T-cell (primary cell): ENCODE measurements at regions of chr2 and their contacts with region 1.

Region 1: DNA sequence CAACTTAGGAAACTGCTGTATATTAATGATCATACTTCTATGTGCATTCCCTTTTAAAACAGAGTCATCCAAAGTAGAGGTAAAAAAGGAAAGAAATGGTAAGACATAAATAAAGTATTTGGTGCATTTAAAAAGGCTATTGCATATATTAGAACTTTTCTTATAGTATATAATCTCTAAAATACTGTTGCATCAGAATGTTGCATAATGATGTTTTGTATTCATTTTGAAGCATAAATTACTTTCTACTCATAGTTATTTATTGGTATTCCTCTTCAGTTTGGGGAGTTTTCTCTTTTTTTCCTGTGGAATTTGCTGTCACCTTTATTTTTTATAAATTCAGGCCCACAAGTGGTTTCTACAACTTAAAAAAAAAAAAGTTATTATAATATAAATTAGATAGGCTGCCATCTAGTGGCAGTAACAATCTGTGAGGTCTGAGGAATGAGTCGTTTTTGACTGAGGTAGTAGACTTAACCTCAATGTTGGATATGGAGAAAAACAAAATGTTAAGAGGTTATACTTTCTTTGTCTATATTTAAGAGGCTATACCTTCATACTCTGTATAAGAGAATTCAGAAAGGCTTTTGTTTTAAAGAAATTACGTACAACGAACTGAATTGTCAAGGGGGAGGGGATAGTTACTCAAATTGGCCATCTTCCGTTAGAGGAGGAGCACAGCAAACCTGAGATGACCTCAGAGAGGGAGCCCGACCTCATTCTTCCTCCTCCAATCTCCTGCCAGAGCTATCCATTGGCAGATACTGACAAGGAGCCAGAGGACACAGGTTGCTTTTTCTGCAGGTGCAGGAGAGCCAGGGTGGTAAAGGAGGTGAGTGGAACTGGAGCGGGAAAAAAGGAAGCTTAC is 23.8 kb downstream of the ANKAR start:
- DNase-seq: peak in 23 of 35 experiments; percentile 5 to 74 (median 28)
- ATAC-seq: peak; percentile 37 to 71 (median 44)
- H3K4me3 ChIP-seq: no peak overlapping the region
- H3K4me3 Mint-ChIP-seq: no peak overlapping the region
- H3K27ac ChIP-seq: no peak overlapping the region
- H3K27ac Mint-ChIP-seq: peak overlapping the region in 1 of 2 donors; percentile 50
- H3K4me1 ChIP-seq: no peaks in the 10 kb centered on the region
- H3K4me1 Mint-ChIP-seq: peaks cover 0 to 4% (median 0%) of the 10 kb centered on the region in 3 donors
- H3K27me3 ChIP-seq: no peaks in the 10 kb centered on the region
- H3K27me3 Mint-ChIP-seq: no peaks in the 10 kb centered on the region

Region 2: DNA sequence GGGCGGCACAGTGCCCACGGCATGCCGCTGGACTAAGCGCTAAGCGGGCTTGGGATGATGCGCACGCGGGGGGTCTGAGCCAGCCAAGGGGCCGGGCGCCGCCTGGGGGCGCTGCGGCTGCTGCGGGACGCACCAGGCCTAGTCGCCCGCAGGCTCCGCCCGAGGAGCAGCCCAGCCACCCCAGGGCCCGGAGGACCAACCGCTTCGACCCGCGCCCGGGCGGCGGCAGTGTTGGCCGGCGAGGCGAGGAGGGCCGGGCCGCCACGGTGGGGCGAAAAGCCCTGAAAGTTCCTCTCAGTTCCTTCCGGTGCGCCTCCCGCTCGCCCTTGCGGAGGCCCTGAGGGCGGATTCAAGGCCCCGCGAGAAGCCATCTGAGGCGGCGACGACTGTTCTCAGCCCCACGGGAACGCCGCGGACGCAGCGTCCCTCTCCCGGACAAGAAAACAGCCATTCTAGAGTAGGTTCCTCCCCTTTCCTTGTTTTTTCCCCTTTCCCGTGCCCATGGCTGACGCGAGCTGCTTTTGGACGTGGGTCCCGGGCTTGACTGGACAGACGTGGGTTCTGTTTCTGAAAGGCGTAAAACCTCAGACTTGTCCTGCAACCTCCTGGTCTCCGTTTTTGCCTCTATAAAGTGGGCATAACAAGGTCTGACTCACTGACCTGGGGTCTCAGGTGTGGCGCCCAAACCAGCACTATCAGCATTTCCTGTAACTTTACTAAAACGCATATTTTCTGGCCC is 23.7 kb before region 1 on chr2 and contains the start of gene ANKAR:
- CTCF ChIA-PET with region 1: interaction called, 14 to 49 read pairs
- POLR2A ChIA-PET with region 1: interaction called in 1 of 2 experiments, 5 read pairs
- DNase-seq: peak; percentile 54 to 89 (median 72)
- ATAC-seq: peak; percentile 95 to 97 (median 96)
- H3K4me3 ChIP-seq: peak within 1 kb of the TSS; percentile 67 to 96
- H3K4me3 Mint-ChIP-seq: peak within 1 kb of the TSS; percentile 91 to 95 (median 93)
- H3K27ac ChIP-seq: peak within 1 kb of the TSS; percentile 88
- H3K27ac Mint-ChIP-seq: peak within 1 kb of the TSS; percentile 97 to 99
- H3K4me1 ChIP-seq: peaks cover 3 to 21% of the 10 kb centered on the region in 2 experiments
- H3K4me1 Mint-ChIP-seq: peaks cover 30 to 44% (median 41%) of the 10 kb centered on the region in 3 donors
- H3K27me3 ChIP-seq: no peaks in the 10 kb centered on the region
- H3K27me3 Mint-ChIP-seq: no peaks in the 10 kb centered on the region
- total RNA-seq, gene ANKAR: 12.5 to 14.9 (median 12.9) TPM

Region 3: GRCh38 chr2:189848276-189848675 is 150.0 kb after region 1 on chr2:
- CTCF ChIA-PET with region 1: no interaction called
- POLR2A ChIA-PET with region 1: no interaction called
- DNase-seq: no peak
- ATAC-seq: no peak
- H3K4me3 ChIP-seq: no peak overlapping the region
- H3K4me3 Mint-ChIP-seq: no peak overlapping the region
- H3K27ac ChIP-seq: no peak overlapping the region
- H3K27ac Mint-ChIP-seq: no peak overlapping the region
- H3K4me1 ChIP-seq: no peaks in the 10 kb centered on the region
- H3K4me1 Mint-ChIP-seq: no peaks in the 10 kb centered on the region
- H3K27me3 ChIP-seq: no peaks in the 10 kb centered on the region
- H3K27me3 Mint-ChIP-seq: no peaks in the 10 kb centered on the region